Heart right ventricle (tissue), 16 donors: ENCODE measurements at regions of chr9 and their contacts with region 1.

Region 1: GRCh38 chr9:118992813-118993794 is 376.1 kb downstream of the BRINP1 start:
- DNase-seq: no peak
- ATAC-seq: peak in 1 of 8 donors; percentile 37
- H3K4me3 ChIP-seq: no peak overlapping the region
- H3K27ac ChIP-seq: no peak overlapping the region
- H3K4me1 ChIP-seq: peaks cover 0 to 25% (median 6%) of the 10 kb centered on the region in 9 donors
- H3K27me3 ChIP-seq: no peaks in the 10 kb centered on the region
- CTCF ChIP-seq: peak in 4 of 9 donors; percentile 16 to 23 (median 18)

Region 2: DNA sequence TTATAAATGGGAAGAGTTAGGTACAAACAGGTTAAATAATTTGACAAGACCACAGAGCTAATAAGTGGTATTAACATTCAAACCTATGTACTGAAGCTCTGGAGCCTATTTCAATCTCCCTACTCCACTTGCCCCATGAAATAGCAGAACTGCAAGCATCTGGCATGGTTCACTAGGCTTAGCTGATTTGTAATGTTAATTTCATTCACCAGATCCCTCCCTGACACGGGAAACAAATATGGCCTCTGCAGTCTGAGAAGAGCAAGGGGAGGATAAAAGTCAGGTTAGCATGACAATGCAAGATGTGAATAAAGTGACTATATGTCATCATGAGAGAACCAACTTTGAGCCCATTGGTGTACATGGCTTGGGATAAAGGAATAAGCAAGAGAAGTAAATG is 52.6 kb before region 1 on chr9:
- intact Hi-C with region 1: loop called in 1 of 10 experiments (anchors 2 kb)
- DNase-seq: no peak
- ATAC-seq: no peak
- H3K4me3 ChIP-seq: no peak overlapping the region
- H3K27ac ChIP-seq: no peak overlapping the region
- H3K4me1 ChIP-seq: no peaks in the 10 kb centered on the region
- H3K27me3 ChIP-seq: no peaks in the 10 kb centered on the region
- CTCF ChIP-seq: no peak

Region 3: DNA sequence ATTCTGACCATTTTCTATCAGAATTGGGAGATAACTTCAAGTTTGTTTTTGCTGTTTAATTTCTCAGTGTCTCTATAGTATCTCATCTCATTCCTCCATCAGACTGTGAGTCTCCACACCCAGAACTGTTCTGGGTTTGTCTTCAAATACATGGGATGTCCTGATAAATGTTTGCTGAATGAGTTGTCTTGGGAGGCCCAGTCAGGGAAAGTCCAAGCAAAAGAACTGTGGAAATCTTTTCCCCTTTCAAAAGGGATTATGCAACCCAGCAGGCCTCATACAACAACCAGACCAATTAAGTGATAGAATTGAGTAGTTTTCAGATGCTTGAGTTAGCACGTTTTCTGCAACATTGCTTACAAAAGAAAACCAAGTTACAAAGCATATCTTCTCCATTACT is 51.7 kb after region 1 on chr9:
- intact Hi-C with region 1: loop called in 1 of 10 experiments (anchors 10 kb)
- DNase-seq: no peak
- ATAC-seq: peak in 1 of 8 donors; percentile 62
- H3K4me3 ChIP-seq: no peak overlapping the region
- H3K27ac ChIP-seq: no peak overlapping the region
- H3K4me1 ChIP-seq: peaks cover 0 to 8% (median 0%) of the 10 kb centered on the region in 9 donors
- H3K27me3 ChIP-seq: no peaks in the 10 kb centered on the region
- CTCF ChIP-seq: no peak

Region 4: GRCh38 chr9:119148855-119149254 is 155.8 kb after region 1 on chr9:
- intact Hi-C with region 1: no loop called
- DNase-seq: no peak
- ATAC-seq: no peak
- H3K4me3 ChIP-seq: no peak overlapping the region
- H3K27ac ChIP-seq: no peak overlapping the region
- H3K4me1 ChIP-seq: no peaks in the 10 kb centered on the region
- H3K27me3 ChIP-seq: no peaks in the 10 kb centered on the region
- CTCF ChIP-seq: no peak